ENCODE measurements at regions of chr18 and their contacts with region 1.

Region 1: DNA sequence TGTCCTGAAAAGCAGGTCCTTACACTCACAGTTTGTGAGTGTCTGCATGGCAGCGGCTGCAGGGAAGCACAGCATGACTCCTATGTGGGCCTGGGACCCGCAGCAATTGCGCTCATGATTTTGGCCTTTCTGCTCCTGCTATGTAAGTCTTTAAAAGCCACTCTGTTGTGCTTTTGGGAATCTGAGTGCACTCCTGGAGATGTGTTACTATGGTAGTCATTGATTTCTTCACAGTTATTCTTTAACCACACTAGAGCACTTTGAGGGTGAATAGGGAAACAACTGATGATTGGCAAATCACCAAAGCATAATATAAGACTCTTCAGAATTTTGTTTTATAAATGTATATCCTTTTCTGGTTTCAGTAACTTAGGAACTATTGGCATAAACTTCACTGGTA is 40.9 kb downstream of the DSG2 start:
- DNase-seq: no peak
- H3K4me3 ChIP-seq: no peak overlapping the region
- H3K27ac ChIP-seq: no peak overlapping the region
- H3K4me1 ChIP-seq: no peaks in the 10 kb centered on the region
- H3K27me3 ChIP-seq: no peaks in the 10 kb centered on the region
- CTCF ChIP-seq: no peak

Region 2: DNA sequence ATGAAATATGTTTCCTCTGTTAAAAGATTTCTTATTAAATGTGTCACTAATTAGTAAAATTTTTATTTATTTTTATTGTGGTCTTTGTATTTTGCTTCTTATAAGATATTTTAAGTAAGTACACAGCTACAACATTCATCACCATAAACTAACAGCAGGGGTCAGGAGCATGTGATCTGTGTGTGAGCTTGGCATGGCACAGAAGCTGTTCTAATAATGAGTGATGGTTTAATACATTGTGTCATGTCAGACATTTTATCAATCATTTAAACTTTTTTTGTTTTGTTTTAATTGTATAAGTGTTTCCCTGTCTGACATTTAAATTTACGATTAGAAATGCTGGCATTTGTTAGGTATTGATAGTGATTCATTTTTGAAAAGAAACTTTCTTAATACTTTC is 1081.7 kb before region 1 on chr18:
- intact Hi-C with region 1: no loop called
- DNase-seq: no peak
- H3K4me3 ChIP-seq: no peak overlapping the region
- H3K27ac ChIP-seq: no peak overlapping the region
- H3K4me1 ChIP-seq: no peaks in the 10 kb centered on the region
- H3K27me3 ChIP-seq: no peaks in the 10 kb centered on the region
- CTCF ChIP-seq: no peak

Region 3: DNA sequence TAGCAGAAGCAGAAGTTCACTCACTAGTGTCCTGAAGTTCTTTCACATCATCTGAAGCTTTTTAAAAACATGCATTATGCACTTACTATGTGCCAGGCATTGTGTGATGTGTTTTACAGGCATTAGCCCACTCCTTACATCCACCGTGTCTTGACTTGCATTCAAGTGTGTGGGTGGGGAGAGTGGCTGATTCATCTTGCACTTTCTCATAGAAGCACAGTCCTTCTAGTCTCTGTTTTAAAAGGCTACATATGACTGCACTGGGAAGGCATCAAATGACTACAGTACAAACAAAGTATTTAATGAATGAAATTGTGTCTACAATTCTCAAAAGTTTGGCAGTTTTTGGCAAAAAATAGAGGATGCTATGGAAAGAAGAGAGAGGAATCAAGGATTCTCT is 474.7 kb before region 1 on chr18:
- intact Hi-C with region 1: loop called (anchors 10 kb)
- DNase-seq: no peak
- H3K4me3 ChIP-seq: no peak overlapping the region
- H3K27ac ChIP-seq: no peak overlapping the region
- H3K4me1 ChIP-seq: no peaks in the 10 kb centered on the region
- H3K27me3 ChIP-seq: no peaks in the 10 kb centered on the region
- CTCF ChIP-seq: no peak

Region 4: GRCh38 chr18:31791763-31792579 is 253.1 kb after region 1 on chr18:
- intact Hi-C with region 1: no loop called
- DNase-seq: no peak
- H3K4me3 ChIP-seq: no peak overlapping the region
- H3K27ac ChIP-seq: no peak overlapping the region
- H3K4me1 ChIP-seq: no peaks in the 10 kb centered on the region
- H3K27me3 ChIP-seq: no peaks in the 10 kb centered on the region
- CTCF ChIP-seq: no peak

Region 5: DNA sequence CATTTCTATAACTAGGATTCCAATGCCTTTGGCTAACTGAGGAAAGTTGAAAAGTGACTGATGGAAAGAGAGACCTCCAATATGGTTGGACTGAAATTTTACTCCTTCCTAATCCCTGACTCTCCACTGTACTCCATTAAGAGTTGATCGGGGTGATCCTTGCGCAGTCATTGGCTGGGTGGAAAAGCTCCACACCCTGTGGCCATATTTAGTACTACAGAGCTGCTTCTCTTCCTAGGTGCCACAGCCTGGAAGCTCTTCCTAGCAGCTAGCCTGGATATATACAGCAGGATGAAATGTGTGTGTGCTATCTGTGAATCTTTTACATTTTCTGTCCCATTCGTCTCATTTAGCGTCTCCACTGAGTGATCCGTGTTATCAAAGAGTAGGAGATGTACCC is 722.2 kb after region 1 on chr18:
- intact Hi-C with region 1: no loop called
- DNase-seq: peak; percentile 3
- H3K4me3 ChIP-seq: no peak overlapping the region
- H3K27ac ChIP-seq: no peak overlapping the region
- H3K4me1 ChIP-seq: no peaks in the 10 kb centered on the region
- H3K27me3 ChIP-seq: no peaks in the 10 kb centered on the region
- CTCF ChIP-seq: peak; percentile 15

Measured in colonic mucosa (tissue), 4 donors.